Calu3 (cell line): ENCODE measurements at regions of chr2 and their contacts with region 1.

Region 1: GRCh38 chr2:50401772-50402653 is 629.9 kb downstream of the NRXN1 start:
- DNase-seq: peak; percentile 63
- H3K4me3 Mint-ChIP-seq: no peak overlapping the region
- H3K27ac Mint-ChIP-seq: no peak overlapping the region
- H3K4me1 Mint-ChIP-seq: no peaks in the 10 kb centered on the region
- H3K27me3 Mint-ChIP-seq: no peaks in the 10 kb centered on the region
- CTCF ChIP-seq: peak; percentile 51

Region 2: DNA sequence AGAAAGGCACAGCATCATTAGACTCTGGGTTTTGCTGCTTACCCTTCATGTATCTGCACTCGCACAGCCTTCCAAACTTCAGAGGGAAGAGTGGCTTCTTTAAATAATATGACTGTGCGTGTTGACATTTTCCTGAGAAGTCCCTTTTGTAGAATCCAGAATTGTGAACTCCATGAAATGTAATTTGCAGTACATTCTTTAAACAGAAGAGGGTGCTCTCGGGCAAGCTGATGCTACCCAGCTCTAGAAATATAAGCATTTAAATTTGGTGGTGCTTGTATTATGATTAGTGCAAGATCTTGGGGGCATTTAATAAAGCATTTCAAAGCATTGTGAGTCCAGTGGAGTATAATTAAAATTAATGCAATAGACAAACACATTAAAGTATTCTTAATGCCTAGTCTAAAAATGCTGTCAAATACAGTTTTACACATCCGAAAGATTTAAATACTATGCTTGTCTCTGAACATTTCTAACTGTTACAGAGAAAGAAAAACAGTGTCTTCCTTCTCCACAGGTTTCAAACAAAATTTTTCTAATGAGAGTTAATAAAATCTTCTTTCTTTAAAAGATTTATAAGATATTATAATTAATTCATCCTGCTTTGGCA is 1801.7 kb before region 1 on chr2:
- CTCF ChIA-PET with region 1: no interaction called
- intact Hi-C with region 1: loop called (anchors 10 kb)
- DNase-seq: peak; percentile 41
- H3K4me3 Mint-ChIP-seq: no peak overlapping the region
- H3K27ac Mint-ChIP-seq: no peak overlapping the region
- H3K4me1 Mint-ChIP-seq: no peaks in the 10 kb centered on the region
- H3K27me3 Mint-ChIP-seq: no peaks in the 10 kb centered on the region
- CTCF ChIP-seq: peak; percentile 44

Region 3: DNA sequence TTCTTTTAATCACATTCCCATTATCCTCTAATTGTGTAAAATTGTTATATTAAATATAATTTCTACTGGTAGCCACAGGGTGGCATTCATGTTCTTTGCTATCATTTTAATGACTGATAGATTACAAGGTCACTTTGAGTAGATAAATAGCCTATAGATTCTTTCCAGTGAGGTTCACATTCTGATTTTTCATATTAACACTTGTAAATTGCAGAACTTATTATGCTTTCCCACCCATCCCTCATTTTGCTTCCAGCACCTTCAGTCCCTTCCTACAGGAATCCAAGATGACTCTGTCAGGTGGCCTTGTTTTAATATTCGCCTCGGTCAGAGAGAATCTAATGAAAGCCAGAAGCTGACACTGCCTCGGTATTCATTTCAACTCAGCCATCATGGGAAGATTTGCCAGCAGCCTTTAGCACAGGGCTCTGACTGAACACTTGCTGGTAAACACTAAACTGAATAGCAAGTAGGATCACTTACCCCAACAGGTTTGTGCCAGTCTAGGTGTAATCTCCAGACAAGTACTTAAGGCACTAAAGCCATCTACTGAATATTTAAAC is 1146.5 kb before region 1 on chr2:
- CTCF ChIA-PET with region 1: no interaction called
- intact Hi-C with region 1: loop called (anchors 5 kb)
- DNase-seq: no peak
- H3K4me3 Mint-ChIP-seq: no peak overlapping the region
- H3K27ac Mint-ChIP-seq: no peak overlapping the region
- H3K4me1 Mint-ChIP-seq: no peaks in the 10 kb centered on the region
- H3K27me3 Mint-ChIP-seq: no peaks in the 10 kb centered on the region
- CTCF ChIP-seq: no peak

Region 4: GRCh38 chr2:49687918-49688317 is 714.1 kb before region 1 on chr2:
- CTCF ChIA-PET with region 1: interaction called, 15 read pairs
- intact Hi-C with region 1: loop called (anchors 2 kb)
- DNase-seq: no peak
- H3K4me3 Mint-ChIP-seq: no peak overlapping the region
- H3K27ac Mint-ChIP-seq: no peak overlapping the region
- H3K4me1 Mint-ChIP-seq: no peaks in the 10 kb centered on the region
- H3K27me3 Mint-ChIP-seq: no peaks in the 10 kb centered on the region
- CTCF ChIP-seq: no peak

Region 5: DNA sequence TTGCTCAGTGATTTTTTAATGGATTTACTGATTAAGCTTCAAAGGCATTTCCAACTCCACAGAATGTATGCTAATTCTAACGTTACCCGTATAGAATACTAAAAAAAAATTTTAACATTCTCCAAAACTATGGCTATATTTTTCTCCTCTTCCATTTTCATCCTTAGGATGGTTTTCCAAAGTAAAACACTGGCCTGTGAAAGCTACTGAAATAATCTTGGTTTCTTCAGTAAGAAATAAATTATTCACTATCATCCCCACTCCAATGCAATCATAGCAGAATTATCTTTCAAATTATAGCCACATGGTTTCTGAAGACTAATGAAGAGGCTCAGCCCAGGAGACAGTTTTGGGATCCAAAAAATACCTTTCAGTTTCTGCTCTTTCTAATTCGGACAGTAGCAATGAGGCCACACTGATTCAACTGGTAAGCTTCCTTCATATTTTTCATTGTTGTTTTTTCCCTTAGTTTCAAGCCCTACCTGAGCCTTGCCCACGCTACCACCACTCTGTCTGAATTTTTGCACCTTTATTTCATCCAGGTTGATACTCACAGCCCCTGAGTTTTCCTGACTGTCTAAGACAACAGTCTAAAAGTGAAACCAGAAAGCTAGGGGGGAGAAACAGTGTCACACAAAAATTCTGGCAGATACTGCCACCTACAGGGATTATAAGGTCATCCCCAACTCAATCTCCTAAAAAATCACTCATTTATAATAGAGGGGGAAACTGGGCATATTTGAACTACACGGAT is 258.0 kb before region 1 on chr2:
- CTCF ChIA-PET with region 1: interaction called, 7 read pairs
- intact Hi-C with region 1: loop called (anchors 5 kb)
- DNase-seq: peak; percentile 8
- H3K4me3 Mint-ChIP-seq: peak overlapping the region; percentile 64
- H3K27ac Mint-ChIP-seq: peak overlapping the region; percentile 19
- H3K4me1 Mint-ChIP-seq: no peaks in the 10 kb centered on the region
- H3K27me3 Mint-ChIP-seq: no peaks in the 10 kb centered on the region
- CTCF ChIP-seq: peak; percentile 29